ENCODE measurements at regions of chr1 and their contacts with region 1.

Region 1: GRCh38 chr1:31745096-31745945 is 18.8 kb downstream of the ADGRB2 start:
- DNase-seq: peak; percentile 55
- H3K4me3 ChIP-seq: no peak overlapping the region
- H3K27ac ChIP-seq: no peak overlapping the region
- H3K4me1 ChIP-seq: no peaks in the 10 kb centered on the region
- H3K27me3 ChIP-seq: peaks cover 0 to 4% of the 10 kb centered on the region in 2 experiments
- CTCF ChIP-seq: peak; percentile 77 to 92
- POLR2A ChIP-seq: no peak

Region 2: DNA sequence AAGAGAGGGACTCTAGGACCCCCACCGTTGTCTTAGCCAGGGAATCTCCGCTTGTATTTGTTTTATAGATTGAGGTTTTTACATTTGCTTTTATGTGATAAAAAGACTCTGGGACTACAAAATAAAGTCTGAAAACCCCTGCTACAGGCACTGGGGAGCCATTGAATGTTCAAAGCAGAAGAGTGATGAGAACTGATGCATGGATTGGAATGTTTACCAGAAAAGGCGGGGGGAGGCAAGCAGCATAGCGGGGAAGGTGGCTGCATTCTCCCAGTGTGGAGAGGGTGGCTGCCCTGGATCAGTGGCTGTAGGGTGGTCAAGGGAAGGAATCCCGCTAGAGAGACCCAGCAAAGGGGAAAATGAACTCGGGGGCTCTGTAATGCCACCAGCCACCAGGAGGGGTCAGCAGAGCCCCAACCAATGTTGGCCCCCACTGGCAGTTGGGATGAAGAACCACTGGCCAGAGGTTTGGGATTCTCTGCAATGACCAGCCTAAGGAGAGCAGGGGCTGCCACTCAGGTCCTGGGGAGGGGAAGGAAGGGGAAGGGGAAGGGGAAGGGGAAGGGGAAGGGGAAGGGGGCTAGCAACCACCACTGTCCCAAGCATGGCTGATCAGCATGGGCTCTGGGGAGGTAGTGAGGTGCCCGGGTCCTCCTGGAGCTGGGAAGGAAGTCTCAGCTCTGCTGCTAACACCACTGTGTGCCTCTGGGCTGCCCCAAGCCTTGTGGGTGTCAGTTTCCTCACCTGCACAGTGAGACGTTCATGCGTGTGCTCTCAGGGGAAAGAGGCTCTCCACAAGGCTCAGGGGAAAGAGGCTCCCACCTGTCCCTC is 81.5 kb before region 1 on chr1:
- CTCF ChIA-PET with region 1: interaction called, 177 read pairs
- POLR2A ChIA-PET with region 1: interaction called, 4 read pairs
- dilution Hi-C with region 1: no loop called
- intact Hi-C with region 1: loop called (anchors 1 kb)
- DNase-seq: peak; percentile 48
- H3K4me3 ChIP-seq: no peak overlapping the region
- H3K27ac ChIP-seq: no peak overlapping the region
- H3K4me1 ChIP-seq: no peaks in the 10 kb centered on the region
- H3K27me3 ChIP-seq: no peaks in the 10 kb centered on the region
- CTCF ChIP-seq: peak; percentile 86 to 90
- POLR2A ChIP-seq: no peak

Region 3: GRCh38 chr1:31705080-31705866 is 40.0 kb before region 1 on chr1:
- CTCF ChIA-PET with region 1: interaction called, 17 read pairs
- POLR2A ChIA-PET with region 1: no interaction called
- dilution Hi-C with region 1: no loop called
- intact Hi-C with region 1: no loop called
- DNase-seq: no peak
- H3K4me3 ChIP-seq: no peak overlapping the region
- H3K27ac ChIP-seq: no peak overlapping the region
- H3K4me1 ChIP-seq: peaks cover 9% of the 10 kb centered on the region
- H3K27me3 ChIP-seq: peaks cover 0 to 3% of the 10 kb centered on the region in 2 experiments
- CTCF ChIP-seq: peak; percentile 5 to 12
- POLR2A ChIP-seq: no peak

Region 4: DNA sequence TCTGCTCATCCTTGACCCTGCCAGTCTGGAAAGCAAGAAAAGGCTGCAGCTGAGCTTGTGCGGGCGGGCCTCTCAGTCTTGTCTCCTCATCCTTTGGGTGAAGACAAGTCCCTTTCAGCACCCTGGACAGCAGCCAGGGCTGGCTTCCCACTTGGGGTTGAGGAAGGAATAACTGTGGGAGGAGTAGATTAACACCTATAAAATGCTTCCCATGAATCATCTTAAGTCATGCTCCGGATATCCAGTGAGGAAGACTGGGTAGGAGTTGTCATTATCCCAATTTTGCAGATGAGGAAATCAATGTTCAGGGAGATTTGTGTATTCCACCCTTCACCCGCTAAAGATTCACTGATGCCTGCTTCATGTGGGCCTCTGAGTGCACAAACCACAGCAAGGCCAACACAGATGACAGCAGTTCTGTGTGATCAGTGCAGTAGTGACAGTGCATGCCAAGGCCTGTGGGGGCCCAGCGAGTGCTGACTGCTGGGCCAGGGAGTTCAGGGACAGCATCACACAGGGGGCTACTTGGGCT is 21.4 kb before region 1 on chr1:
- CTCF ChIA-PET with region 1: interaction called, 5 read pairs
- POLR2A ChIA-PET with region 1: no interaction called
- dilution Hi-C with region 1: no loop called
- intact Hi-C with region 1: loop called (anchors 2 kb)
- DNase-seq: peak; percentile 62
- H3K4me3 ChIP-seq: no peak overlapping the region
- H3K27ac ChIP-seq: no peak overlapping the region
- H3K4me1 ChIP-seq: no peaks in the 10 kb centered on the region
- H3K27me3 ChIP-seq: peaks cover 0 to 4% of the 10 kb centered on the region in 2 experiments
- CTCF ChIP-seq: no peak
- POLR2A ChIP-seq: no peak

Region 5: DNA sequence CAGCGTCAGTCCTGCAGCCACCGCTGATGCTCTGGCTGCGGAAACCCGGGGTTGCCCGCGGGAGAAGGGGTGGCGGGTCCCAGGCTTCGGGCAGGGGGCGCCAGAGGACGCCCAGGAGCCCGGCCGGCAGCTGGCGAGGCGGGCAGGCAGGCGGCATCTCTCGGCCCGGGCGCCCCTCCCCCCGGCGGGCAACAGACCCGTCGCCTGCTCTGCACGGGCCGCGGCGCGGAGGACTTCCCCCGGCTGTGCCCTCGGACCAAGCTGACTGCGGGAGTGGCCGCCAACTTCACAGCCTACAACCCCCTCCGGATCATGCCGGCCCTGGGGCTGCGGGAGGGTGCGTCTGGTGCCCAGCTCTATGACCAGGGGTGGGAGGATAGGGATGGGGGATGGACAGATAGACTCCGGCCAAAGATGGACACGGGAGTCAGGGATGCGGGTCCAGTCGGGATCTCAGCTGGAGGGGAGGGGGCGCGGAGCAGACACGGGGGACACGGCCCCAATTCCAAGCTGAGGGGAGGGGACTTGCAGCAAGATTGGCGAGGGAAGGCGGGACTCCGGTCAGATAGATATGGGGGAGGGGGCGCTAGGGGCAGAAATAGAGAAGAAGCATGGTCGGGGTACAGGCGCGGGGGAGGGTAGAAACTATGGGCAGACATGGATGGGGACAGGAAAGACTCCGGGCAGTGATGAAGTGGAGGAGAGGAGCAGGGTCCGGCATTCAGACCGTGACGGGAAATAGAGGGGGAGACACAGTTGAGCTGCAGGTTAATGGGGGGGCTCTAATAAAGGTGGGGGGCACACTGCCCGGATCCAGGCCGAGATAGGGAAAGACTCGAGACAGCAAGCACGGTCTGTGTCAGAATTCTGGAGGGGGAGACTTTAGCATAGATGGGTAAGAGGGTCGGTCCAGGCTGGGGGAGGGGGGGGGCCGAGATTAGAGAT is 17.7 kb after region 1 on chr1:
- CTCF ChIA-PET with region 1: interaction called, 17 read pairs
- POLR2A ChIA-PET with region 1: no interaction called
- dilution Hi-C with region 1: no loop called
- intact Hi-C with region 1: no loop called
- DNase-seq: peak; percentile 63
- H3K4me3 ChIP-seq: peak overlapping the region; percentile 40 to 42 (median 42)
- H3K27ac ChIP-seq: no peak overlapping the region
- H3K4me1 ChIP-seq: peaks cover 26% of the 10 kb centered on the region
- H3K27me3 ChIP-seq: peaks cover 3 to 4% of the 10 kb centered on the region in 2 experiments
- CTCF ChIP-seq: peak; percentile 55 to 78
- POLR2A ChIP-seq: no peak

Measured in endothelial cell of umbilical vein (primary cell).